MCF 10A (cell line): ENCODE measurements at regions of chr3 and their contacts with region 1.

Region 1: GRCh38 chr3:127817396-127817841 is 4.9 kb downstream of the MGLL start:
- DNase-seq: peak; percentile 92
- H3K4me3 Mint-ChIP-seq: no peak overlapping the region
- H3K27ac Mint-ChIP-seq: peak overlapping the region; percentile 90
- H3K4me1 Mint-ChIP-seq: peaks cover 43% of the 10 kb centered on the region
- H3K27me3 Mint-ChIP-seq: no peaks in the 10 kb centered on the region
- CTCF ChIP-seq: no peak

Region 2: GRCh38 chr3:127792602-127793292 is 24.7 kb before region 1 on chr3:
- CTCF ChIA-PET with region 1: interaction called, 3 read pairs
- POLR2A ChIA-PET with region 1: interaction called, 4 read pairs
- intact Hi-C with region 1: loop called (anchors 1 kb)
- DNase-seq: peak; percentile 90
- H3K4me3 Mint-ChIP-seq: no peak overlapping the region
- H3K27ac Mint-ChIP-seq: no peak overlapping the region
- H3K4me1 Mint-ChIP-seq: peaks cover 30% of the 10 kb centered on the region
- H3K27me3 Mint-ChIP-seq: no peaks in the 10 kb centered on the region
- CTCF ChIP-seq: no peak